A673 (cell line): ENCODE measurements at regions of chr14 and their contacts with region 1.

Region 1: DNA sequence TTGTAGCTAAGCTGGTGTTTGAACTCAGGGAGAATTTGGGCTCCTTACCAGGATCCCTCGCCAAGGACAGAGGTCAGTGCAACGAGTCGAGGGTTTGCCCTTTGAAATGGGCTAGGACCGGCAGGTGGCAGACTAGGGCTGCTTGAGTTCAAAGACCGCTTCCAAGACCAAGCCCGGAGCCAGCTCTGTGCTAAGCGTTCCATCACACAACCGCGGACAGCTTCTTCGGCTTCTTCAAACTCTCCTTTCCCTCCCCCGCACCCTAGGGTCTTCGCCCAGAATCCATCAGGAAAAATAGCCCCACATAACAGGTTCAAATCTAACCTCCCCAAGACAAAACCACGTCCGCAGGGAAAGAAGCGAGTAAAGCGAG is 705 bp upstream of the FLVCR2 start:
- DNase-seq: peak; percentile 50
- H3K4me3 ChIP-seq: peak overlapping the region; percentile 42
- H3K27ac ChIP-seq: no peak overlapping the region
- H3K4me1 ChIP-seq: peaks cover 6% of the 10 kb centered on the region
- H3K27me3 ChIP-seq: peaks cover 10% of the 10 kb centered on the region
- CTCF ChIP-seq: peak; percentile 52

Region 2: DNA sequence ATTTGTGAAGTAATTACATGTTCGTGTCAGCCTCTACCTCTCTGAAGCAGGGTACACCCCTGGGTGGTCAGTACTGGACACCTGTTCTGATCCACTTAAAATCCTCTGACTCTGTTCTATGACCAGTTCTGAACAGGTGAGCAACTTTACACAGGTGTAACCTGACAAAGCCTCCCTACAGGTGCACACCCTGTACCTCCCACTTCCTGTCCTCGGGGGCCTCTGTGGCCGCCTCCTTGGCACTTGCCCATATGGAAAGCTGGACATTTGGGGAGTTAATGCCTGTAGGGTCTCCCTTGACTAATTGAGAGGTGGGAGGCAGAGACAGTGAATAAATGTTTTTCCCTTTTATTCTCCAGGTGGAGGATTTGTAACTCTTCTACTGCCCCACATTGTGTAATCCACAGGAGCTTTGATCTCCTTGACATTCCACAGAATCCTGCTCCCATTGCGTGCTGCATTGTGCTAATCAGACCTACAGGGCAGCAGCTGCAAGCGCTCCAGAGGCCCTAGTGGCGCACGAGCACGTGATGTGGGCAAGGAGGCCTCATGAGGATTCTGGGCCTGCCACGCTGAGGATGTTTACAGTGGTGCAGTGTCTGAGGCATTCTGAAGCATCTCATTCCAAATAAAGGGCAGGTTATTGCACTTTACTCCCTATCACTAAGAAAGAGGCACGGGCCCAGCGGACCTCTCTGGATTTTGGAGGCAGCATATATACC is 101.3 kb before region 1 on chr14:
- CTCF ChIA-PET with region 1: no interaction called
- POLR2A ChIA-PET with region 1: interaction called, 22 read pairs
- intact Hi-C with region 1: no loop called
- DNase-seq: no peak
- H3K4me3 ChIP-seq: no peak overlapping the region
- H3K27ac ChIP-seq: no peak overlapping the region
- H3K4me1 ChIP-seq: no peaks in the 10 kb centered on the region
- H3K27me3 ChIP-seq: no peaks in the 10 kb centered on the region
- CTCF ChIP-seq: no peak

Region 3: GRCh38 chr14:75654127-75654732 is 76.5 kb after region 1 on chr14:
- CTCF ChIA-PET with region 1: interaction called, 7 read pairs
- POLR2A ChIA-PET with region 1: no interaction called
- intact Hi-C with region 1: loop called (anchors 5 kb)
- DNase-seq: peak; percentile 63
- H3K4me3 ChIP-seq: no peak overlapping the region
- H3K27ac ChIP-seq: no peak overlapping the region
- H3K4me1 ChIP-seq: no peaks in the 10 kb centered on the region
- H3K27me3 ChIP-seq: no peaks in the 10 kb centered on the region
- CTCF ChIP-seq: peak; percentile 97

Region 4: GRCh38 chr14:75982266-75983018 is 404.7 kb after region 1 on chr14:
- CTCF ChIA-PET with region 1: interaction called, 3 read pairs
- POLR2A ChIA-PET with region 1: no interaction called
- intact Hi-C with region 1: loop called (anchors 5 kb)
- DNase-seq: peak; percentile 89
- H3K4me3 ChIP-seq: peak overlapping the region; percentile 95
- H3K27ac ChIP-seq: peak overlapping the region; percentile 92
- H3K4me1 ChIP-seq: peaks cover 9% of the 10 kb centered on the region
- H3K27me3 ChIP-seq: no peaks in the 10 kb centered on the region
- CTCF ChIP-seq: peak; percentile 60